Activated naive CD4-positive, alpha-beta T cell treated with anti-CD3 and anti-CD28 coated beads for 36 hours (primary cell): ENCODE measurements at regions of chr3 and their contacts with region 1.

Region 1: GRCh38 chr3:72375237-72376076 is 472.8 kb downstream of the SHQ1 start:
- DNase-seq: peak; percentile 70
- H3K4me3 Mint-ChIP-seq: peak overlapping the region; percentile 20
- H3K27ac Mint-ChIP-seq: peak overlapping the region; percentile 82
- H3K4me1 Mint-ChIP-seq: peaks cover 62% of the 10 kb centered on the region
- H3K27me3 Mint-ChIP-seq: no peaks in the 10 kb centered on the region

Region 2: GRCh38 chr3:72339116-72340030 is 36.1 kb before region 1 on chr3:
- CTCF ChIA-PET with region 1: interaction called, 3 read pairs
- intact Hi-C with region 1: loop called (anchors 1 kb)
- DNase-seq: no peak
- H3K4me3 Mint-ChIP-seq: no peak overlapping the region
- H3K27ac Mint-ChIP-seq: no peak overlapping the region
- H3K4me1 Mint-ChIP-seq: peaks cover 36% of the 10 kb centered on the region
- H3K27me3 Mint-ChIP-seq: no peaks in the 10 kb centered on the region

Region 3: DNA sequence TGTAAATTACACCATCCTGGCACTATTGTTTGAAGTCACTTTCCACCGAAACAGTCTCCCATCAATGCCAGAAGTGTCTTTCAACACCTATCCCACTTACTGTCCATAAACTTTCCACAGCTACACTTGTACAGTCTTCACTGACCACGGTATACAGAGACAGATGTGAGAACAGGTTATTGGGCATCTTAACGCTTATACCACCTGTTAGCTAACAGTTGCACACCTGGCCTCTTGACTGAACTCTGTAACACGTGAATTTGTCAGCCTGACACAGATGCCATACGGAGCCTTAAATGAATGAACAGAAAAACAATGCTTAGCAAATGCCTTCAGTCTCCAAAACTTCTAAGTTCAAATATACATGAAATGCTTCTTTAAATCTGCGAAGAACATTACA is 32.3 kb after region 1 on chr3:
- CTCF ChIA-PET with region 1: no interaction called
- intact Hi-C with region 1: loop called (anchors 2 kb)
- DNase-seq: no peak
- H3K4me3 Mint-ChIP-seq: no peak overlapping the region
- H3K27ac Mint-ChIP-seq: no peak overlapping the region
- H3K4me1 Mint-ChIP-seq: peaks cover 85% of the 10 kb centered on the region
- H3K27me3 Mint-ChIP-seq: no peaks in the 10 kb centered on the region

Region 4: GRCh38 chr3:72447059-72447946 is 71.8 kb after region 1 on chr3:
- CTCF ChIA-PET with region 1: no interaction called
- intact Hi-C with region 1: loop called (anchors 1 kb)
- DNase-seq: peak; percentile 88
- H3K4me3 Mint-ChIP-seq: peak overlapping the region; percentile 54
- H3K27ac Mint-ChIP-seq: no peak overlapping the region
- H3K4me1 Mint-ChIP-seq: peaks cover 37% of the 10 kb centered on the region
- H3K27me3 Mint-ChIP-seq: peaks cover 12% of the 10 kb centered on the region

Region 5: DNA sequence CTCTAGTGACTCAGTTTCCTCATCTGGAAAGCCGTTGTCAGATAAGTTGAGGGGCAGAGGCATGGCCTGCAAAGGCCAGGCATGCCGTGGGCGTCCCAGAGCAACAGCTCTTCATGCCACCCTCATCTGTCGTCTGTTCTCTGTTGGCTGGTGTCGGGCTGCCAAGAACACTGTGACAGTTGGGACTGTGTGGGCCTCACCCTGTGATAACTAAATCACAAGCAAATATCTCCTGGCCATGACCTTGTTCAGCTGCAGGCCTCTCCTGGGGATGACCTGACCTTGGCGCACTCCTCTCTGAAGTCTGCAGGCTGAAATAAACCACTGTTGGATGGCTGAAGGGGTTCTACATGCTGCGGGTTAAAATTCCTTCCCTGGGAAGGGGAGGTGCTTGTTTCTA is 326.9 kb after region 1 on chr3:
- CTCF ChIA-PET with region 1: no interaction called
- intact Hi-C with region 1: no loop called
- DNase-seq: no peak
- H3K4me3 Mint-ChIP-seq: no peak overlapping the region
- H3K27ac Mint-ChIP-seq: no peak overlapping the region
- H3K4me1 Mint-ChIP-seq: no peaks in the 10 kb centered on the region
- H3K27me3 Mint-ChIP-seq: no peaks in the 10 kb centered on the region

Region 6: DNA sequence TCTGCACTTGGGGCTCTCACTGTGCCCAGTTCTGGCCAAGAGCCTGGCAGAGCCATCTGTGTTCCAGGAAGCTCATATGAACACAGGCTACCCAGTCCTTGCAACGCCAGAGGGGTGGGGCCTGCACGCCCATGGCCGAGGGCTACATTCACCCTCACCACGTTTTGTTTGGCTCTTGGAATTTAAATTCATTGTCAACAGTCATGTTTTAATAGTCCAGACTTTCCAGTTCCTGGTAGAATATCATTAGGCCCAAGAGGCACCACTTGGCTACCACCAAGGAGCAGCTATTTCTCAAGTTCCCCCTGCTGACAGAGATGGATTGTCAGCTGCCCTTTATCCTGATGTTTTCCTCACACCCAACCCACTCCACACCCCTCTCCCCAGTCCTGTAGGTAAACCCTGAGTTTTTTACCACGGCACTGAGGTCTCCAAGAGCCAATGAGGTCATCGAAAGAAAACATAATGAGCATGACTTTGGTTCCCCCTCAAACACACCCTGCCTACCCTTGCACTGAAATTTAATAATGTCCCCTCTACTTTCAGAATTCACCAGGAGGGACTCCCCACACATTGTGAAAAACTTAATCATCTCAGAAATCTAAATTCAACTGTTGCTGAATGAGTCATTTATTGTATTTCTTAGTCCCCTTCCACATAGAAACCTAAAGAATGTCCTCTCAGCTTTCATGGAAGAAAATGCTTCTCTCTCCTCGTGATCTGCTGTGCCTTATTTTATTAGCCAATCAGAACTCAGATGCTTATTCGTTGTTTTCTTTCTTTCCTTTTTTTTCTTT is 347.7 kb after region 1 on chr3:
- CTCF ChIA-PET with region 1: no interaction called
- intact Hi-C with region 1: loop called (anchors 1 kb)
- DNase-seq: peak; percentile 27
- H3K4me3 Mint-ChIP-seq: no peak overlapping the region
- H3K27ac Mint-ChIP-seq: no peak overlapping the region
- H3K4me1 Mint-ChIP-seq: peaks cover 17% of the 10 kb centered on the region
- H3K27me3 Mint-ChIP-seq: no peaks in the 10 kb centered on the region